PC-9 (cell line): ENCODE measurements at regions of chr7 and their contacts with region 1.

Region 1: DNA sequence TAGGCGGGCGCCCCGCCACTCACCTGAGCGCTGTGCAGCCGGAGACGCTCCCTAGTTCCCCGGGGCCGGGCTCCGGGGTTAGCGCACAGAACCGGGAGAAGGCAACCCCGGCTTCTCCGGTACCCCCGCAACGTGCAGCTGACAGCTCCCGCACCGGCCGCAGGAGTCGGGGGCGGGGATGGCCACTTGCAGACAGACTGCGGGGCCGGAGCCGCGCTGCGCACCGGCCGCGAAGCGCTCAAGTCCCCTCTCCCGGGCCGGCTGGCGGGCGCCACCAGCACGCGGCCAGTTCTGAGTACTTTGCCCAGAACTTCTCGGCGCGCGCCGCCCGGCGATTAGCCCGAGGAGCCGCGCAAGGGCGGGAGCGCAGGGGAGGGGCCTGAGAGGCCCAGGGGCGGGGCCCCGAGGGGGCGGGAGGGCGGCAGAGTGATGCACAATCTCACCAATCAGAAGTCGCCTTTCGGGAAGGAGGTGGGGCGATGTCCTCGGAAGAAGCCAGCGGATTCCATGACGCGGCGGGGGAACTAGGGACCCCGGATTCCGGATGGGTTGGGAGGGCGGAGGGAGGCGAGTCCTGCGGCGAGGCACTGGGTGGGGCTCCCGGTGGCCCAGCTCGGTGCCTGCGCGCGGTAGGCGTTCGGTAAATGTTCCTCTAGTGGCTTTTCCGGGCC is at the start of gene OSBPL3:
- DNase-seq: peak; percentile 90 to 98
- H3K4me3 ChIP-seq: peak within 1 kb of the TSS; percentile 63
- H3K27ac ChIP-seq: peak within 1 kb of the TSS; percentile 77
- H3K4me1 ChIP-seq: peaks cover 24% of the 10 kb centered on the region
- H3K27me3 ChIP-seq: no peaks in the 10 kb centered on the region
- CTCF ChIP-seq: no peak
- total RNA-seq, gene OSBPL3: 87.6 and 88.4 TPM in 2 replicates

Region 2: DNA sequence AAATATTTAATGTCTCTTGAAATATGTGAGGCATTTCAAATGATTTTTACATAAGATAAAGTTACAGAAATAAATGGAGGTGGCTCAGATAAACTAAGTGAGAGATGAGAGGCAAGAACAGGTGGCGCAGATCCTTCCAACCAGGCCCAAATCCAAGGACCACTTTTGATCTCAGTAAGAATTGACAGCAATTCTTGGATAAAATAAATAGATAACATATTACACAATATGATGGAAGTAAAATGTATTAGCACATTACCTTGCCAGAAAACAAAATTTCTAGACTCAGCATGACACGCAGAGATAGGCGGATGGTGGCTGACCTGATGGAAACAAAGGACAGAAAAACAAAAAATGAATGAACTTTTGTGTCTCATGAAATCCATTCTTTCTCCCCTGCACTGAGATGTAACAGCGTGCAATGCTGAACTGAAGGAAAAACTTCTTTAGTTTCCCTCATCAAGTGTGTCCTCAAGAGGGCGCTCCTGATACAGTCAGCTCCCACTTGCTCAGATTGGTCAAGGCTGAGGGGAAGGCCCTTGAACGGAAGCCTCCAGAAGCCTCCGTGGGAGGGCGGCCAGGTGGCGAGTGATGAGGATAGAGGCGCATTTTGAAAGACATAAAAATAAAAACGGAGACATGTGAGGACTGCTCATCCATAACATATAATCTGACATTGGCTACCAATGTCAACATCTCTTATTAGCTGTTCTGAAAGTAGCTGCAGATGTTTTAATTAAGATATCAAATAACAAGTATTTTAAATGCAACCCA is 159.9 kb before region 1 on chr7:
- CTCF ChIA-PET with region 1: interaction called, 7 read pairs
- POLR2A ChIA-PET with region 1: interaction called, 9 read pairs
- intact Hi-C with region 1: loop called (anchors 1 kb)
- DNase-seq: peak; percentile 77 to 81
- H3K4me3 ChIP-seq: peak overlapping the region; percentile 22; the same call in 1 of the 2 replicates
- H3K27ac ChIP-seq: peak overlapping the region; percentile 97
- H3K4me1 ChIP-seq: peaks cover 47% of the 10 kb centered on the region
- H3K27me3 ChIP-seq: no peaks in the 10 kb centered on the region
- CTCF ChIP-seq: peak; percentile 99

Region 3: DNA sequence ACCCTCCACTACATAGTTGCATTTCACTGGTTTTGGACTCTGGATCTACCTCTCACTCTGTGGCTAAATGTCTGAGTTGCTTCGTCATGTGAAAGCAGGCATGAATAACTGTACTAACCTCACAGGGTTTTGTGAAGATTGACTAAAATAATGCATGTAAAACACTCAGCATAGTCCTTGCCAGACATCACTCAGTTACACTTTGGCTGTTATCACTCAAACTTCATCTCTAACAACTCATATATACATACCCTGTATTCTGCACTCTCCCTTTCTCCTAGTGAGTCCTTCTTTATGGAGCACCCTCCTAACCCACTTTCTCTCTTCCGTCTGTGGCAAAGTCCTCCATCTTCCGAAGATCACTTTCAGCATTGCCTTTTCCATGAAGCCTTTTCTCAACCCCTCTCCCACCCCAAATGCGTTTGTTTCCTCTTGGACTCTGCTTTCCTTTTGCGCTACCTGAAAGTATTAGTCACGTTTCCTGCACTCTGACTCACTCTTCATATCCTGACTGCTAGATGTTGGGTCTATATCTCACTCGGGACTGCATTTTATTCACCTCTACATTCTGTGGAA is 72.6 kb before region 1 on chr7:
- CTCF ChIA-PET with region 1: no interaction called
- POLR2A ChIA-PET with region 1: interaction called, 4 read pairs
- intact Hi-C with region 1: loop called (anchors 1 kb)
- DNase-seq: peak; percentile 47 to 88
- H3K4me3 ChIP-seq: peak overlapping the region; percentile 21
- H3K27ac ChIP-seq: peak overlapping the region; percentile 86
- H3K4me1 ChIP-seq: peaks cover 58% of the 10 kb centered on the region
- H3K27me3 ChIP-seq: no peaks in the 10 kb centered on the region
- CTCF ChIP-seq: no peak

Region 4: GRCh38 chr7:25028370-25029021 is 48.5 kb after region 1 on chr7:
- CTCF ChIA-PET with region 1: interaction called, 10 read pairs
- POLR2A ChIA-PET with region 1: interaction called, 36 read pairs
- intact Hi-C with region 1: loop called (anchors 1 kb)
- DNase-seq: peak; percentile 66 to 99
- H3K4me3 ChIP-seq: peak overlapping the region; percentile 2; the same call in 1 of the 2 replicates
- H3K27ac ChIP-seq: peak overlapping the region; percentile 87
- H3K4me1 ChIP-seq: peaks cover 88% of the 10 kb centered on the region
- H3K27me3 ChIP-seq: no peaks in the 10 kb centered on the region
- CTCF ChIP-seq: no peak

Region 5: DNA sequence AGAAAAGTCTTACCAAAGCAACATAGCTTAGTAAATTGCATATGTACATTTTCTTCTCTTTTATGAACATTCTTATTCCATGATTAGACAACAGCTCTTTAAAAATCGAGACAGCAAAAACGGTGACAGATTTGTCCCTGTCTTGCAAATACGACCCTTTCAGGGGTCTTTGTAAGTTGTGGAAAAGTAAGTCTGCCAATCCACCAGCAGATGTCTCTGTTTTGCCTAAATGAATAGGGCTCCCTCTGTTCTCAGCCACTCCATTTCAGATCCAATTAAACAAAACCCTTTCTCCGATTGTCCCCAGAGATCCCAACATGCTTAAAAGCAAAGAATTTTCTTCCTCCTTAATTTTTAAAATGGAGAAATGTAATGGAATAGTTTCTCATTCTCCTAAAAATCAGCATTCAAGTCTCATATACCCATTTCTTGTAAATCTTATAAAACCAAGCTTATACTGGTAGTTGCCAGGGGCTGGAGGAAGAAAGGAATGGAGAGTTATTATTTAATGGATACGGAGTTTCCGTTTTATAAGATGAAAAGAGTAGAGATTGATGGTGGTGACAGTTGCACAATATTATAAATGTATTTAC is 1111.0 kb after region 1 on chr7:
- CTCF ChIA-PET with region 1: no interaction called
- POLR2A ChIA-PET with region 1: interaction called, 15 read pairs
- intact Hi-C with region 1: no loop called
- DNase-seq: peak in 1 of 2 experiments; percentile 50
- H3K4me3 ChIP-seq: no peak overlapping the region
- H3K27ac ChIP-seq: no peak overlapping the region
- H3K4me1 ChIP-seq: peaks cover 31% of the 10 kb centered on the region
- H3K27me3 ChIP-seq: no peaks in the 10 kb centered on the region
- CTCF ChIP-seq: peak; percentile 92